Panc1 (cell line): ENCODE measurements at regions of chr10 and their contacts with region 1.

Region 1: DNA sequence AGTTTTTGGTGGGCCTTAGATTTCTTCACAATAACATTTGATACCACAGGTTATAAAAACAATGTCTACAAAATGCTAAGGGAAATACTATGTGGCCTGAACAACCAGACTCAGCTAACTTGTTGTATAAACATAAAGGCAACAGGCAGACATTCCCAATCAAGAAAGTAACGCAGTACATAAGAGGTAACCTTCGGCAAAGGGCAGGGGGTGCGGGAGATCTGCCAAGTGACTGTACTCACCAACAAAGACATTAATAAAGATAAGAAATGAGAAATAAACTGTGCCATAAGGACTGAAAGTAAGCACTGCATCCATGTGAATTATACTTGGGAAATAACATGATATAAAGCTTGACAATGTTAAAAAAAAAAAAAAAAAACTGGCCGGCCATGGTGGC is 15.4 kb downstream of the NSUN6 start:
- DNase-seq: no peak
- ATAC-seq: no peak
- H3K4me3 ChIP-seq: no peak overlapping the region
- H3K27ac ChIP-seq: no peak overlapping the region
- H3K4me1 ChIP-seq: no peaks in the 10 kb centered on the region
- H3K27me3 ChIP-seq: no peaks in the 10 kb centered on the region
- CTCF ChIP-seq: no peak

Region 2: DNA sequence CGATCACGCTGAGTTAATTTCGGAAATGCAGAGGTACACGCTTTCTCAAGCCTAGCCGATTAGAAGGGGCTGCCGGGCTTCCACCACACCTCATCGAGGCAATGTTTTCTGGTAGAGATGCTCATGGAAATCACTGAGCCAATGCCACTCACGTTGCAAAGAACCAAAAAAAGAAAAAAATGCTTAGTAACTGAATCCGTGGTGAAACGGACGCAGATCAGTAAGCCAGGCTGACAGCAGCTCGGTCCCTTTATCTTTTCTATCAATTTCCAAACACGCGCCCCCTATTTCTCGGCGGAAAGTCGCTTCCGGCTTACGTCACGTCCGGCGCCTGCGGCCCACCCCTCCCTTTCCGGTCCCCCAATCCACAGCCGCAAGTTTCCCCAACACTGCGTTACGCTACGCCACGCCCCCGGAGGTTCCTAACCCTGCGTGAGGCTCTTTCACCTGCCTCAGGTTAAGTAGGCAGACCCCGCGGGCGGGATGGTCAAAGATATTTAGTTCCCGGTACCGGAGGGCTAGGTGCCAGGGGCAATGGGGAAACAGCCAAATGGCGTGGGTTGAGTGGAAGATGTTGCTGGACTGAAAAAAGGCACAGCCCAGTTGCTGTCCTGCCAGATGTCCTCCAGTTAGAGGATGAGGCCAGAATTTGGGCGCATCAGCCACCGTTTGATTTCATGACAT is 15.5 kb after region 1 on chr10 and contains the start of gene NSUN6:
- CTCF ChIA-PET with region 1: interaction called, 13 read pairs
- POLR2A ChIA-PET with region 1: no interaction called
- in situ Hi-C with region 1: no loop called
- intact Hi-C with region 1: no loop called
- DNase-seq: no peak
- ATAC-seq: peak; percentile 99
- H3K4me3 ChIP-seq: peak within 1 kb of the TSS; percentile 96 to 98
- H3K27ac ChIP-seq: peak within 1 kb of the TSS; percentile 89
- H3K4me1 ChIP-seq: peaks cover 5% of the 10 kb centered on the region; the same call in 1 of the 2 replicates
- H3K27me3 ChIP-seq: no peaks in the 10 kb centered on the region
- CTCF ChIP-seq: no peak
- total RNA-seq, gene NSUN6: 4.3 TPM